ENCODE measurements at regions of chrX and their contacts with region 1.

Region 1: GRCh38 chrX:54891573-54891972 is 29.1 kb upstream of the TRO start:
- DNase-seq: peak; percentile 46
- ATAC-seq: peak; percentile 56
- H3K4me3 Mint-ChIP-seq: no peak overlapping the region
- H3K27ac Mint-ChIP-seq: no peak overlapping the region
- H3K4me1 Mint-ChIP-seq: no peaks in the 10 kb centered on the region
- H3K27me3 Mint-ChIP-seq: peaks cover 4% of the 10 kb centered on the region
- CTCF ChIP-seq: peak; percentile 40

Region 2: DNA sequence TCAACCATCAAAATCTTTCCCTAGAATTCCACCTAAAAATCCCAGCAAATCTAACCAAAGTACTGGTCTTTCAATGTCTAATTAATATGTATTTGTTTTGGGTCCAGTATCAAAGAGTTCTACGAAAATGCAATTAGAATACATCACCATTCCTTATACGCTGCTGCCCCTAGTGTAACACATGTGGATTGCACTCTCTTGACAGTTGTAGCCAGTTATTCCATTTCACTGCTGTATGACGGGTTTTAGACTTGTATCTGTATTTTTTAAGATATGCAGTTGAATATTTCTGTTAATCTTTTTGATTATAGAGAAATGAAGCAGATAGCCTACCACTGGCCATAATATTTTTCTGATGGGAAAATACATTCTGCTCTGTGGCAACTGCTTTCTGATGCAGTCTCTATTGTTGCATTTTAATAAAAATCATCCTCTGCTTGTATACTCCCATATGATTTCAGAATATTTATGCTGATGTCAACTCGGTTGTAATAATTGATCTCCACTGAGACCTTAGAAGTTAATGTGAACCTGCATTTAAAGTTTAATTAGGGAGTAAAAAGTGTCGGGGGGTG is 166.2 kb after region 1 on chrX:
- CTCF ChIA-PET with region 1: interaction called, 24 read pairs
- POLR2A ChIA-PET with region 1: no interaction called
- intact Hi-C with region 1: loop called (anchors 5 kb)
- DNase-seq: peak; percentile 46
- ATAC-seq: peak; percentile 79
- H3K4me3 Mint-ChIP-seq: peak overlapping the region; percentile 43
- H3K27ac Mint-ChIP-seq: no peak overlapping the region
- H3K4me1 Mint-ChIP-seq: peaks cover 12% of the 10 kb centered on the region
- H3K27me3 Mint-ChIP-seq: no peaks in the 10 kb centered on the region
- CTCF ChIP-seq: peak; percentile 77